B cell (primary cell): ENCODE measurements at regions of chr1 and their contacts with region 1.

Region 1: GRCh38 chr1:12143631-12144155 is 23.1 kb upstream of the TNFRSF1B start:
- DNase-seq: peak; percentile 77
- ATAC-seq: peak; percentile 65
- H3K4me3 ChIP-seq: no peak overlapping the region
- H3K4me3 Mint-ChIP-seq: peak overlapping the region; percentile 63
- H3K27ac ChIP-seq: peak overlapping the region; percentile 29 to 59
- H3K27ac Mint-ChIP-seq: peak overlapping the region; percentile 93
- H3K4me1 ChIP-seq: peaks cover 53 to 81% of the 10 kb centered on the region in 2 donors
- H3K4me1 Mint-ChIP-seq: peaks cover 71% of the 10 kb centered on the region
- H3K27me3 ChIP-seq: no peaks in the 10 kb centered on the region
- H3K27me3 Mint-ChIP-seq: no peaks in the 10 kb centered on the region
- CTCF ChIP-seq: no peak

Region 2: GRCh38 chr1:11615090-11615489 is 528.6 kb before region 1 on chr1:
- CTCF ChIA-PET with region 1: no interaction called
- POLR2A ChIA-PET with region 1: no interaction called
- intact Hi-C with region 1: no loop called
- DNase-seq: no peak
- ATAC-seq: no peak
- H3K4me3 ChIP-seq: no peak overlapping the region
- H3K4me3 Mint-ChIP-seq: no peak overlapping the region
- H3K27ac ChIP-seq: no peak overlapping the region
- H3K27ac Mint-ChIP-seq: no peak overlapping the region
- H3K4me1 ChIP-seq: no peaks in the 10 kb centered on the region
- H3K4me1 Mint-ChIP-seq: no peaks in the 10 kb centered on the region
- H3K27me3 ChIP-seq: peaks cover 0 to 3% (median 0%) of the 10 kb centered on the region in 4 experiments
- H3K27me3 Mint-ChIP-seq: peaks cover 24% of the 10 kb centered on the region
- CTCF ChIP-seq: no peak

Region 3: GRCh38 chr1:11952455-11953109 is 191.1 kb before region 1 on chr1:
- CTCF ChIA-PET with region 1: no interaction called
- POLR2A ChIA-PET with region 1: no interaction called
- intact Hi-C with region 1: no loop called
- DNase-seq: no peak
- ATAC-seq: no peak
- H3K4me3 ChIP-seq: no peak overlapping the region
- H3K4me3 Mint-ChIP-seq: no peak overlapping the region
- H3K27ac ChIP-seq: no peak overlapping the region
- H3K27ac Mint-ChIP-seq: no peak overlapping the region
- H3K4me1 ChIP-seq: no peaks in the 10 kb centered on the region
- H3K4me1 Mint-ChIP-seq: no peaks in the 10 kb centered on the region
- H3K27me3 ChIP-seq: no peaks in the 10 kb centered on the region
- H3K27me3 Mint-ChIP-seq: no peaks in the 10 kb centered on the region
- CTCF ChIP-seq: no peak

Region 4: GRCh38 chr1:12095452-12096263 is 48.0 kb before region 1 on chr1:
- CTCF ChIA-PET with region 1: no interaction called
- POLR2A ChIA-PET with region 1: no interaction called
- intact Hi-C with region 1: no loop called
- DNase-seq: no peak
- ATAC-seq: no peak
- H3K4me3 ChIP-seq: no peak overlapping the region
- H3K4me3 Mint-ChIP-seq: no peak overlapping the region
- H3K27ac ChIP-seq: no peak overlapping the region
- H3K27ac Mint-ChIP-seq: no peak overlapping the region
- H3K4me1 ChIP-seq: no peaks in the 10 kb centered on the region
- H3K4me1 Mint-ChIP-seq: peaks cover under 1% of the 10 kb centered on the region
- H3K27me3 ChIP-seq: no peaks in the 10 kb centered on the region
- H3K27me3 Mint-ChIP-seq: no peaks in the 10 kb centered on the region
- CTCF ChIP-seq: no peak

Region 5: GRCh38 chr1:12132092-12132491 is 11.6 kb before region 1 on chr1:
- CTCF ChIA-PET with region 1: interaction called, 169 read pairs
- POLR2A ChIA-PET with region 1: interaction called, 3 read pairs
- intact Hi-C with region 1: no loop called
- DNase-seq: no peak
- ATAC-seq: no peak
- H3K4me3 ChIP-seq: no peak overlapping the region
- H3K4me3 Mint-ChIP-seq: peak overlapping the region; percentile 16
- H3K27ac ChIP-seq: peak overlapping the region; percentile 76 to 81
- H3K27ac Mint-ChIP-seq: peak overlapping the region; percentile 56
- H3K4me1 ChIP-seq: peaks cover 18 to 38% of the 10 kb centered on the region in 2 donors
- H3K4me1 Mint-ChIP-seq: peaks cover 34% of the 10 kb centered on the region
- H3K27me3 ChIP-seq: no peaks in the 10 kb centered on the region
- H3K27me3 Mint-ChIP-seq: no peaks in the 10 kb centered on the region
- CTCF ChIP-seq: no peak

Region 6: GRCh38 chr1:12184008-12184681 is 40.5 kb after region 1 on chr1:
- CTCF ChIA-PET with region 1: interaction called, 3 read pairs
- POLR2A ChIA-PET with region 1: interaction called, 4 read pairs
- intact Hi-C with region 1: loop called (anchors 5 kb)
- DNase-seq: peak; percentile 60
- ATAC-seq: peak; percentile 67
- H3K4me3 ChIP-seq: no peak overlapping the region
- H3K4me3 Mint-ChIP-seq: peak overlapping the region; percentile 67
- H3K27ac ChIP-seq: peak overlapping the region; percentile 26 to 43
- H3K27ac Mint-ChIP-seq: peak overlapping the region; percentile 87
- H3K4me1 ChIP-seq: peaks cover 25 to 62% of the 10 kb centered on the region in 2 donors
- H3K4me1 Mint-ChIP-seq: peaks cover 64% of the 10 kb centered on the region
- H3K27me3 ChIP-seq: no peaks in the 10 kb centered on the region
- H3K27me3 Mint-ChIP-seq: no peaks in the 10 kb centered on the region
- CTCF ChIP-seq: peak; percentile 24

Region 7: DNA sequence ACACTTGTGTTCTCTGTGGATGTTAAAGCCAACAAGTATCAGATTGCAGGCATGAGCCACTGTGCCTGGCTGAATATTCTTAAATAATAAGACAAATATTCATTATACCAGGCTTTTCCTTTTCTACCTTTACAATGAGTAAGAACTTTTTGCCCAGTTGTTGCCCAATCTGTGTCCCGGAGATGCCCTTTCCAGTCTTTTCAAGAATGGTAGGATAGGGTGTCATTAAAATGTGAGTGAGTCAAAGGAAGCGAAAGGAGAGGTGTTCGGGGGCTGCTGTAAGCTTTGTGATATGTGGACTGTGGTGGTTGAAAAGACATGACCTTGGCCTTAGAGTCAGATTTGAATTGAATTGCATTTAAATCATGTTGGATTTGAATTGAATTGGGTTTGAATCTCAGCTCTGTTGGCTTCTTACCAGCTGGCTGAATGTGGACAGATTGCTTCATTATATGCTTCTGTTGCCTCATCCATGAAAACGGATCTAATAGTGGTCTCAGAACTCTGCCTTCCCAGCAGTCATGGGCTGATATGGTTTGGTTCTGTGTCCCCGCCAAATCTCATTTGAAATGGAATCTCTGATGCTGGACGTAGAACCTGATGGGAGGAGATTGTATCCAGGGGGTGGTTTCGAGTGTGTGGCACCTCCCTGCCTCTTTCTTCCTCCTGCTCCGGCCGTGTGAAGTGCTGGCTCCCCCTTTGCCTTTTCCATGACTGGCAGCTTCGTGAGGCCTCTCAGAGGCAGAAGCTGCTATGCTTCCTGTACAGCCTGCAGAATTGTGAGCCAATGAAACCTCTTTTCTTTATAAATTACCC is 549.5 kb after region 1 on chr1:
- CTCF ChIA-PET with region 1: no interaction called
- POLR2A ChIA-PET with region 1: no interaction called
- intact Hi-C with region 1: no loop called
- DNase-seq: no peak
- ATAC-seq: no peak
- H3K4me3 ChIP-seq: no peak overlapping the region
- H3K4me3 Mint-ChIP-seq: no peak overlapping the region
- H3K27ac ChIP-seq: no peak overlapping the region
- H3K27ac Mint-ChIP-seq: no peak overlapping the region
- H3K4me1 ChIP-seq: no peaks in the 10 kb centered on the region
- H3K4me1 Mint-ChIP-seq: no peaks in the 10 kb centered on the region
- H3K27me3 ChIP-seq: no peaks in the 10 kb centered on the region
- H3K27me3 Mint-ChIP-seq: peaks cover 22% of the 10 kb centered on the region
- CTCF ChIP-seq: no peak